OCI-LY7 (cell line): ENCODE measurements at regions of chr15 and their contacts with region 1.

Region 1: GRCh38 chr15:94670438-94671034 is 439.2 kb downstream of the MCTP2 start:
- DNase-seq: peak; percentile 35
- H3K4me3 ChIP-seq: no peak overlapping the region
- H3K27ac ChIP-seq: no peak overlapping the region
- H3K4me1 ChIP-seq: no peaks in the 10 kb centered on the region
- CTCF ChIP-seq: peak; percentile 86

Region 2: GRCh38 chr15:94412979-94413746 is 257.4 kb before region 1 on chr15:
- CTCF ChIA-PET with region 1: no interaction called
- POLR2A ChIA-PET with region 1: no interaction called
- intact Hi-C with region 1: loop called (anchors 10 kb)
- DNase-seq: peak; percentile 51
- H3K4me3 ChIP-seq: no peak overlapping the region
- H3K27ac ChIP-seq: no peak overlapping the region
- H3K4me1 ChIP-seq: peaks cover 29% of the 10 kb centered on the region
- CTCF ChIP-seq: peak; percentile 96

Region 3: DNA sequence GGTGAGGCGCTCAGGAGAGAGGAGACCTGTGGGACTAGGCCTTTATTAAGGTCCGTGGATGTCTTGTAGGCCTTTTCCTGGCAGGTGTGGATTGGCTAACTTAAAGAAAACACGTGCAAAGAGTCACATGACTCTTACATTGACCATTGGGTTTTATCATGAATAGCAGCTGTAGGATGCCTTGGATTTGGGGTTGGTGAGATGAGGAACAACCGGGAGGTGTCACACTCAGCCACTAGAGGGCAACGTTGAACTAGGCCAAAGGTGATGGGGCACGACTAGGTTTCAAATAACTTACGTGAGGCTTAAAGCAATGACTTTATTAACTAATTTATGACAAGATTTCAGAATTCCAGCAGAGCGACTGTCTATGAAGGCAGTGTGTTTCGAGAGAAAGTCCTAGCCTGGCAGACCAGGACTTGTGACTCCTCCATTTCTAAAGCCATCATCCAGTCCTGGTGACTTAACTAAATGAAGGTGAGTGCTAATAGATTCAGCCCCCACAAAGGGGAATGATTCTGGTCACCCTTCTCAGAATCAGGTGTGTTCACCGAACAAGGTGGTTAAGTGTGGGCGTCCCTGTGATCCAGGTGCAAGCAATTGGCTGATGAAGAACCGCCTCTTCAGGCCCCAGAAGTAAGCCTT is 93.5 kb before region 1 on chr15:
- CTCF ChIA-PET with region 1: no interaction called
- POLR2A ChIA-PET with region 1: no interaction called
- intact Hi-C with region 1: loop called (anchors 5 kb)
- DNase-seq: peak; percentile 64
- H3K4me3 ChIP-seq: no peak overlapping the region
- H3K27ac ChIP-seq: no peak overlapping the region
- H3K4me1 ChIP-seq: no peaks in the 10 kb centered on the region
- CTCF ChIP-seq: peak; percentile 89

Region 4: DNA sequence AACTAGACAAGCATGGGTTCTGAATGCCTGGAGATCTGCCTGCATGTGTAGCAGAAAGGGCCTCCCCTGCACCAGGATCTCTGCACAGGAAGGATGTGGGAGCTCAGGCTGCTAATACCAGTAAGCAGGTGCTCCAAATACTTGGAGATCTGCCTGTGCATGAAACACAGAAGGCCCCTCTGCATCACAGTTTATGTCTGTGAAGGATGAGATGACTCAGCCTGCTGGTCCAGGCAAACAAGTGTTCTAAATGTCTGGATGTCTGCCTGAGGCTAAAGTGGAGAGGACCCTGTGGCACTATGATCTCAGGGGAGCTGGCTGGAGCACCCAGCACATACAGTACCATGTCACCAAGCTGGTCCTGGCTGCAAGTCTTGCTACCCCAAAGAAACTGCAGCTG is 239.6 kb after region 1 on chr15:
- CTCF ChIA-PET with region 1: no interaction called
- POLR2A ChIA-PET with region 1: no interaction called
- intact Hi-C with region 1: no loop called
- DNase-seq: no peak
- H3K4me3 ChIP-seq: no peak overlapping the region
- H3K27ac ChIP-seq: no peak overlapping the region
- H3K4me1 ChIP-seq: no peaks in the 10 kb centered on the region
- CTCF ChIP-seq: no peak

Region 5: DNA sequence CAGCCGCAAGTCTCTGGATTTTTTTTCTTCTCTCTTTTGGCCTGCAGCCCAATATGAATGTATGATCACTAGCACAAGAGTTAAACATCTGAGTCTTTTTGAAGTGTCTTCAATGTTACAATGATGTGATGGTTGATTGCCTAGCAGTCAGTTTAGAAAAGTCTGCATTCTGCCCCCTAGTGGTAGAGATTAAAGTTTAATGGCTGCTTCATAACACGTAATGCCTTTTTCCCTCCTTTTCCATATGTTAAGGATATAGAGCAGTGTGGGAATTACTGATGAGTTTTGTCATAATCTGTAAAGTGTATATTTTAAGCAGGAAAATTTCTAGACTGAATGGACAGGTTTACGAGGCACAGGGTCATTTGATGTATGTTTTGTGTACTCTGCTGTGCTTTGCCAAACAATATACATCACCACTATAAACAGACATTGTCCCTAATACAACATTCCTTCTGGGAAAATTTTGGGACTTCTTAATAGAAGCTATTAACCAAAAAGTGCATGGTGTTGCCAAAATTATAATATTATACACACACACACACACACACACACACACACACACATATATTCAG is 621.4 kb after region 1 on chr15:
- CTCF ChIA-PET with region 1: no interaction called
- POLR2A ChIA-PET with region 1: no interaction called
- intact Hi-C with region 1: loop called (anchors 10 kb)
- DNase-seq: peak; percentile 54
- H3K4me3 ChIP-seq: no peak overlapping the region
- H3K27ac ChIP-seq: no peak overlapping the region
- H3K4me1 ChIP-seq: no peaks in the 10 kb centered on the region
- CTCF ChIP-seq: peak; percentile 91